ENCODE measurements at regions of chr3 and their contacts with region 1.

Region 1: GRCh38 chr3:150183678-150184425 is 213.2 kb upstream of the PFN2 start:
- DNase-seq: peak; percentile 74
- H3K4me3 Mint-ChIP-seq: no peak overlapping the region
- H3K27ac Mint-ChIP-seq: no peak overlapping the region
- H3K4me1 Mint-ChIP-seq: peaks cover 17% of the 10 kb centered on the region
- H3K27me3 Mint-ChIP-seq: no peaks in the 10 kb centered on the region
- CTCF ChIP-seq: peak; percentile 71

Region 2: DNA sequence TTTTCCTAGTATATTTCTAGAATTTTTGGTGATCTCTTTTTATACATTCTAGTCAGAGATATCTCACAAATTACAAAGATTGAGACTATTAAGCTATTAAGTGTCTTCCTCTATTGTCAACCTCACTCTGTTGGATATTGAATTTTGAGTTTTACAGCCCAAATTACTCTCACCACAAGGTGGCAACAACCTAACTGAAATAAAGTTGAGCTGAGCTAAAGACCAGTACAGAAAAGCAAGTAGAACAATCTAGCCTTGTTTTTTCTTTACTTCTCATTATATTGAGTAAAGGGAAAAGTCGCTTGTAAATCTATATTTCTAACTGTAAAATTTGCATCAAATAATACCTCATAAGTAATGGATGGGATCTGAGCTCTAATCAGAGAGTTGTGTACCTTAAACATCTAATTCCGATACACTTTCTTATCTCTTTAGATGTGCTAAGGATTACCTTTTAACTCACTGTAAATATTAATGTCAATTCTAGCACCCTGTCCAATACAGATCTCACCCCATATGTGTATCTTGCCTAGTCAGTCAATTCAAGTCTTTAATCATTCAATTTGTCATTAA is 418.0 kb before region 1 on chr3:
- CTCF ChIA-PET with region 1: interaction called, 3 read pairs
- intact Hi-C with region 1: loop called (anchors 10 kb)
- DNase-seq: peak; percentile 28
- H3K4me3 Mint-ChIP-seq: no peak overlapping the region
- H3K27ac Mint-ChIP-seq: no peak overlapping the region
- H3K4me1 Mint-ChIP-seq: no peaks in the 10 kb centered on the region
- H3K27me3 Mint-ChIP-seq: no peaks in the 10 kb centered on the region
- CTCF ChIP-seq: peak; percentile 49

Region 3: GRCh38 chr3:149801639-149802038 is 382.2 kb before region 1 on chr3:
- CTCF ChIA-PET with region 1: no interaction called
- intact Hi-C with region 1: no loop called
- DNase-seq: no peak
- H3K4me3 Mint-ChIP-seq: no peak overlapping the region
- H3K27ac Mint-ChIP-seq: no peak overlapping the region
- H3K4me1 Mint-ChIP-seq: peaks cover 18% of the 10 kb centered on the region
- H3K27me3 Mint-ChIP-seq: no peaks in the 10 kb centered on the region
- CTCF ChIP-seq: no peak

Region 4: DNA sequence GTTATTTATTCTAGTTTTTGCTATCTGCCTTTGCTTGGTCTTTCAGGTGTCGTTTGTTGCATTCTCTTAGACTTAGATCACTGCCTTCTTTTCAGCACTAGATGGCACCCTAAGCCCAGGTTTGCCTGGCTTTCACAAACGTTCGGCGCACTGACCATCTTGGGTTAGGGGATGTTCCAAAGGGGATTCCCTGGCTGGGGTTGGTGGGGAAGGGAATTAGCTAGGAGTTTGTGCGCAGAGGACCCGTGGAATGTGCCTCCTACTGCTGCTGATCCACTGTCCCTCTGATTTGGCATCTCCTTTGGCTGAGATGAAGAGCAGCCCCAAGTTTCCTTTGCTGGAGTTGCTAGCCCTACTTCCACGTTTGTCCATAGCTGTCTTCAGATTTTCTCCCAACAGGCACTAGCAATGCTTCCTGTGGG is 247.0 kb before region 1 on chr3:
- CTCF ChIA-PET with region 1: interaction called, 7 read pairs
- intact Hi-C with region 1: loop called (anchors 1 kb)
- DNase-seq: peak; percentile 68
- H3K4me3 Mint-ChIP-seq: no peak overlapping the region
- H3K27ac Mint-ChIP-seq: no peak overlapping the region
- H3K4me1 Mint-ChIP-seq: no peaks in the 10 kb centered on the region
- H3K27me3 Mint-ChIP-seq: no peaks in the 10 kb centered on the region
- CTCF ChIP-seq: peak; percentile 88

Region 5: GRCh38 chr3:149969940-149970715 is 213.7 kb before region 1 on chr3:
- CTCF ChIA-PET with region 1: interaction called, 41 read pairs
- intact Hi-C with region 1: loop called (anchors 1 kb)
- DNase-seq: peak; percentile 91
- H3K4me3 Mint-ChIP-seq: peak overlapping the region; percentile 80
- H3K27ac Mint-ChIP-seq: peak overlapping the region; percentile 87
- H3K4me1 Mint-ChIP-seq: peaks cover 32% of the 10 kb centered on the region
- H3K27me3 Mint-ChIP-seq: no peaks in the 10 kb centered on the region
- CTCF ChIP-seq: no peak

Region 6: GRCh38 chr3:150114873-150115540 is 68.8 kb before region 1 on chr3:
- CTCF ChIA-PET with region 1: no interaction called
- intact Hi-C with region 1: no loop called
- DNase-seq: no peak
- H3K4me3 Mint-ChIP-seq: no peak overlapping the region
- H3K27ac Mint-ChIP-seq: no peak overlapping the region
- H3K4me1 Mint-ChIP-seq: no peaks in the 10 kb centered on the region
- H3K27me3 Mint-ChIP-seq: peaks cover 62% of the 10 kb centered on the region
- CTCF ChIP-seq: no peak

Region 7: GRCh38 chr3:150220799-150221198 is 36.9 kb after region 1 on chr3:
- CTCF ChIA-PET with region 1: interaction called, 4 read pairs
- intact Hi-C with region 1: loop called (anchors 1 kb)
- DNase-seq: no peak
- H3K4me3 Mint-ChIP-seq: peak overlapping the region; percentile 62
- H3K27ac Mint-ChIP-seq: no peak overlapping the region
- H3K4me1 Mint-ChIP-seq: peaks cover 13% of the 10 kb centered on the region
- H3K27me3 Mint-ChIP-seq: peaks cover 56% of the 10 kb centered on the region
- CTCF ChIP-seq: no peak

Region 8: DNA sequence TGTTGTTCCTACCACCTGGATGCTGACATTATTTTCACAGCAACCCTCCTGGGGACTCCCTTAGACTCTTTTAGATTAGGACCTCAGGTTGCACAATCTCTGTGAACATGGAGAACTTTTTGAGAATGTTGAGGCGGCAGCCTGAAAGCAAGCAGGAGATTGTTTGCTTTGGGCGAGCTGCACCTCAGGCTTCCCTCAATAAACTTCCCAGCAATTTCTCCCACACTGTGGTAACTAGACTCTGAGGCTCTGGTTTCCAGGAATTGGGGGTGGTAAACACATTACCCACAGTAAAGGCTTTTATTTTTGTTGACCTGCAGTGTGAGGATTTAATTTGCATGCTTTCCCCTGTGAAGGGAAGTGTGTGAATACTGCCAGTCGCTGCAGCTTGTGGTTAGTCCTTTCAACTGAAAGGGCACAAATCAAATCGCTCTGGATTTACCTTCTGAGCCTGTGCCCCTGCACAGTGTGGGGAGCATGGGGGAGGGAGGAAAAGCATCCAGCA is 614.3 kb after region 1 on chr3:
- CTCF ChIA-PET with region 1: no interaction called
- intact Hi-C with region 1: no loop called
- DNase-seq: no peak
- H3K4me3 Mint-ChIP-seq: no peak overlapping the region
- H3K27ac Mint-ChIP-seq: no peak overlapping the region
- H3K4me1 Mint-ChIP-seq: no peaks in the 10 kb centered on the region
- H3K27me3 Mint-ChIP-seq: peaks cover 45% of the 10 kb centered on the region
- CTCF ChIP-seq: no peak